ENCODE measurements at regions of chr12 and their contacts with region 1.

Region 1: DNA sequence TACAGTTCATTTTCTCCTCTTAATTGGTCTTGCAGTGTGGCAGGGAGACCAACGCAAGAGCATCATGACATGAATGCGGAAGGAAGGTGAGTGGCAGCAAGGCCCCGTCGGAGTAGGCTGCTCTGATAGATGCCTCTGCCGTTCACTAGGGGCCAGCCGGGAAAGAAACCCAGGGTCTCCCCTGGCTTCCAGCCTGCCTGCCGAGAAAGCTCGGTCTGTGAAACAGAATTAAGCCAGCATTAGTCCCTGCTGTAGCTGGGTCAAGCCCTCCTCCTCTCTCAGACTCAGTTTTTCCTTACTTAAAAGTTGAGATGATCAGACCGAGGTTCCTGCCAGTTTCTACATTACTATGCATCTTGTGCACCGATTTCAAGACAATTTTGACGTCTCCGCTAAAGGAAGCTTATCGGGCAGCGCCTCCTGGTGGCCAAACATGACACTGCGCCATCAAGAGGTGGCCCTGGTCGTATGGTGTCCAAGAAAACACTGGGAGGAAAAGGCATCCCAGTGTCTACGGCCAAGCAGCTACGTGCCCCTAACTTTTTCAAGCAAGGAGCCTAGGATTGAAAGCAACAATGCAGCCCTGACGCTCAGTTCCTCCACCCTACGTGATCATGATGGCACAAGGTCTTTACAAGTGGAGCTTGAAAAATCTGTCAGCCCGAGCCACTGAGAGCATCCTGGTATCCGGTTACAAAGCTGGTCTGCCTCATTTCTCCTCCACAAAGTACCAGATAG is 131.6 kb downstream of the KSR2 start:
- DNase-seq: no peak
- H3K4me3 ChIP-seq: no peak overlapping the region
- CTCF ChIP-seq: peak; percentile 93

Region 2: DNA sequence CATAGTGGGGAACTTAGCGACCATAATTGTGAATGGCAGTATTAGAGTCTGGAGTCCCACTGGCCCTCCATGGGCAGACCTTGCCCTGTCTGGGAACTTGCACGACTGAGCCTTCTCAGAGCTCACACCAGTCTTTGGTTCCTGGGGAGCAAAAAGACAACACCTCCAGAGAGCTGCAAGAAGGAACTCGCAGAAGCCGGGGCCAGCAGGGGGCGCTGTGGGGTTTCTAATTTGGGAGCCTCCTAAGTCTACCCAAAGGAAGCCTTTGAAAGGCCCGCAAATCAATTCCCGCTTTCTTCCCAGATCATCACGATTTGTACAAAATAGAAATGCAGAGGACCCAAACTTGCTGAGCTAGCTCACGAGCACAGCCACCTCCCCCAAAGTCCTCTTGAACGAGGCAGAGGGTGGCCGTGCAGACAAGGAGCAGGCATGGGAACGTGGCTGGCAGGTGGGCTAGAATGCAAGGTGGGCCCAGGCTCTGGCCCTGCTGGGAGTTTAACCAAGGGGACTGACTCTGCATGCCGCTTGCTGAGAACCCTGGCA is 600.6 kb before region 1 on chr12:
- CTCF ChIA-PET with region 1: interaction called, 54 read pairs
- POLR2A ChIA-PET with region 1: no interaction called
- DNase-seq: no peak
- H3K4me3 ChIP-seq: no peak overlapping the region
- CTCF ChIP-seq: peak; percentile 64

Region 3: DNA sequence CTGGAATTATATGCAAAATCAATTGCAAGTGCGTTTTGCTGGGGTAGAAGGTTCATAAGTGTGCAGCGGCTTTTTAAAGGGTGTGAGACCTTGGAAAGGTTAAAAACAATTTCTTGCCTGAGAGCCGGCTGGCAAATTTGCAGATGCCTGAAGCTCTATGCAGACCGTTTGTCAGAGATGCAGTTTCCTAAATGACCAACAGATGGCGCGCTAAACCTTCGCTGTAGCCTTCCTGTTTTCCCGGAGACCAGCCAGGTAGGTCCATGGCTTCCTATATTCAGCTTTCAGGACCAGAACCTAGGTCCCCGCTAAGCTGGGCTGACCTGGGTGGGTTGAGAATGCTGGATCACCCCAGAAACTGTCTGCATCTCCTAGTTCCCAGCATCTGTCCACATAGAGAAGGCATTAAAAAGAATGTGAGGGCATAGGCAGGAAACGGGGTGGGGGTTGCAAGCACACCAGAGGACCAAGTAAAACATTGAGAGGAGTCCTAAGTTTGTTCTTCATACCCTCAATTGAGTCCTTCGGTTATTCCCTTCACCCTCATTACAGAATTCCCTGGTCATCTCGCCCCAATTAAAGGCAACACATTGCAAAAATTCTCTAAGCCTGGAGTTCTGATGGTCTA is 470.0 kb before region 1 on chr12:
- CTCF ChIA-PET with region 1: interaction called, 392 read pairs
- POLR2A ChIA-PET with region 1: interaction called, 6 read pairs
- DNase-seq: peak; percentile 12
- H3K4me3 ChIP-seq: no peak overlapping the region
- CTCF ChIP-seq: peak; percentile 83

Region 4: DNA sequence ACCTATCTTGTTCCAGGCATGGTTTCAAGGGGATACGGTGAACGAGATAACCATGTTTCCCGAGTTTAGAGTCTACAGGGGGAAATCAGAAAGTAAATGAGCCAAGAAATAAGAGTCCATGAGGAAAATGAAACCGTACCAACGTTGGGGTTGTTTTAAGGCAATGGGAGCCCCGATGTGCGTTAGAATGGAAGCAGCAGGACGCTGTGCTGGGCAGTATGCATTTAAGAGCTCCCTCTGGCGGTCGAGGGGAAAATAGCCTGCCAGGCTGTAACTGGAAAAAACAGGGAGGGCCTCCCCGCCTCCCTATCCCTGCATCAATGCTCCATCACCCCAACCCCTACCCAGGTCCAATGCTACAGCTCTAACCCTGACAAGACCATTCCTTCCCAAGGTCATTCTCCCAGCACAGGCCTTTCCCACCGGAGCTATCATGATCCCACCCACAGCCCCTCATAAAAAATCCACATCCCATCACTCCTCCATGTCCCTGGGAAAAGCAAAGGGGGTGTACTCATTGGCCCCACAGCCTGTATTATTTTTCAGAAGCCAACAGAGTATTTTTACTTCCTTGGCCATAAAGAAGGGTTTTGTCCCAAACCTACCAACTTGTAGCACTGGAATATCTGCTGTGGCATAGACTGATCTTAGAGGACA is 249.4 kb before region 1 on chr12:
- CTCF ChIA-PET with region 1: interaction called, 107 read pairs
- POLR2A ChIA-PET with region 1: no interaction called
- DNase-seq: no peak
- H3K4me3 ChIP-seq: no peak overlapping the region
- CTCF ChIP-seq: peak; percentile 77

Region 5: DNA sequence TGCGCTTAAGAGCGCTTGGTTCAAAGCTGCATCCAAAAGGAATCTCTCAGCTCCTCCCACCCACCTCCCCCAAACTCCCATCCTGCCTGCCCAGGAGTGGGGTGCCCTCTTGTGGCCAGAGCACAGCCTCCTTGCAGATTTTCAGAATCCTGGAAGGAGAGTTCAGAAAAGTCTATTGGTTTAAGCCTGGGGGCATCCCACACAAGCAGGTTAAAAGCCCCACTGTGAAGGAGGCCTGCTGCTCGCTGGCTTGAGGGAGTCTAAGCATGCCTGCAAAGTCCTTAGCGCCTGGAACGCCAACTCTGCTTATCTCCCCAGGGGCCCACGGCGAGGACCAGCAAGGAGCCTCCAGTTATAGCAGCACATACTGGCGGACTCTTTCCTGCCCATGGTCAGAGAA is 165.4 kb before region 1 on chr12:
- CTCF ChIA-PET with region 1: interaction called, 23 read pairs
- POLR2A ChIA-PET with region 1: no interaction called
- DNase-seq: no peak
- H3K4me3 ChIP-seq: no peak overlapping the region
- CTCF ChIP-seq: peak; percentile 64

Region 6: GRCh38 chr12:117742721-117743120 is 94.4 kb before region 1 on chr12:
- CTCF ChIA-PET with region 1: no interaction called
- POLR2A ChIA-PET with region 1: no interaction called
- DNase-seq: no peak
- H3K4me3 ChIP-seq: no peak overlapping the region
- CTCF ChIP-seq: no peak

Region 7: DNA sequence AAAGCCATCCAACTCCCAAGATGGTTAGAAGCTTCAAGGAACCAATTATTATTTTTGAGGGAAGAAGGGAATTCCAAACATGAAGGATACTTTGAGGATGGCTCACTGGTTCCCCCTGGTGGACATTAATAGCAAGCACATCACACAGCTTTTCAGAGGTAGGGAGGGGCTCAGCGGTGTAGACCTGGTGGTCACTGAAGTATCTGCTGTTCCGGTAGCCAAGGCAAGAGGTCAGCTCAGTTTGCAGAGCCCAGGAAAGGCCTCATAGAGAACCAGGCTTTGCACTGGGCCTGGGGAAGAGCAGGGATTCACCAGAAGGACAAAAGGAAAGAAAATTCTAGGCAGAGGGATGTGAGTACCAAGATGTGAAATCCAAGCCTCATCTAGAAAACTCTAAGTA is 12.9 kb after region 1 on chr12:
- CTCF ChIA-PET with region 1: interaction called, 68 read pairs
- POLR2A ChIA-PET with region 1: no interaction called
- DNase-seq: no peak
- H3K4me3 ChIP-seq: no peak overlapping the region
- CTCF ChIP-seq: peak; percentile 81

Measured in AG04449 (cell line).